Activated CD4-positive, alpha-beta memory T cell treated with anti-CD3 and anti-CD28 coated beads, Interleukin-2, amount 10 ng/mL, durations not matched to agents 7 days and 5 days (primary cell): ENCODE measurements at regions of chr6 and their contacts with region 1.

Region 1: DNA sequence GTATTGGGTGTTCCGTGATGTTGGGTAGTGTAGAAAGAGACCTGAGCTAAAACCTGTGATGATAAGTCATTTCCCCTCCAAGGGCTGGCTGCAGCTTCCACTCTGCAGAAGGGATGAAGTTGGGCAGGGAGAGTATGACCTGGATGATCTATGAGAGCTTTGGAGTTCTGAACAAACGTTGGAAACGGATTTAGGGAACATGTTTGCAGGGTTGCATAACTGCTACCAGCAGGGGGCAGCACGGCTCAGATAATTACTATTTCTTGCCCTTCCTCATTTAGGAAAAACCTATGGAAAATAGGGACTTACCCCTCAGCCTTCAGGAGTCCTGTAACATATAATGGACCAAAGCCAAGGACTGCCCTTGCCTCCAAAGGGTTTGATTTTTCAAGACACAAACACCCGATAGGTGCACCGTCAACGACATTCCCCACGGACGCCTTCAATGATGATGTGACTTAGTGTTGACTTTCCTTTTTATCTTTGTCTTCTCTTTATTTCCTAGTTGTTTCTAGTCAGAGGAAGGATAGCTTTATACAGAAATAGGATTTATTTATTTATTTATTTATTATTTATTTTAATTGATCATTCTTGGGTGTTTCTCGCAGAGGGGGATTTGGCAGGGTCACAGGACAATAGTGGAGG is 164.9 kb upstream of the SASH1 start:
- DNase-seq: peak; percentile 21
- H3K4me3 Mint-ChIP-seq: no peak overlapping the region
- H3K27ac Mint-ChIP-seq: no peak overlapping the region
- H3K4me1 Mint-ChIP-seq: no peaks in the 10 kb centered on the region
- H3K27me3 Mint-ChIP-seq: peaks cover 12% of the 10 kb centered on the region

Region 2: GRCh38 chr6:148021699-148022098 is 156.0 kb before region 1 on chr6:
- CTCF ChIA-PET with region 1: no interaction called
- POLR2A ChIA-PET with region 1: no interaction called
- DNase-seq: no peak
- H3K4me3 Mint-ChIP-seq: no peak overlapping the region
- H3K27ac Mint-ChIP-seq: no peak overlapping the region
- H3K4me1 Mint-ChIP-seq: no peaks in the 10 kb centered on the region
- H3K27me3 Mint-ChIP-seq: no peaks in the 10 kb centered on the region

Region 3: DNA sequence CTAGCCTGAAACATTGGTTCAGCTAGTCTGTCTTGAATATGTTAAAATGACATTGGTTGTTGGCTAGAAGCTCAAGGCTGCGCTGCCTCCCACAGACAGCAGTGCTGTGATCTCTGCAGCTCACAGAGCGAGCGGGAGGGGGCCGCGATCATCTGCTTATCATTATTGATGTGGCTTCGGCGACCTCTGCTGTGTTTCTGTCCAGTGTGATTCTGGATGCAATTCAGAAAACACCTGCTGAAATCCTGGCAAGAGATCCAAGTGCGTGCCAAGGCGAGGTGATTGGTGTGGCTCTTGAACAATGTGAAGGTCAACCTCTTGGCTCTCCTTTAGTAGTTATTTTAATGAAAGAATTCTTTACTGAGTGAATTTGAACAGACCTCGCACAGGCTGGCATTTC is 22.6 kb after region 1 on chr6:
- CTCF ChIA-PET with region 1: interaction called, 10 read pairs
- POLR2A ChIA-PET with region 1: no interaction called
- DNase-seq: no peak
- H3K4me3 Mint-ChIP-seq: no peak overlapping the region
- H3K27ac Mint-ChIP-seq: no peak overlapping the region
- H3K4me1 Mint-ChIP-seq: peaks cover 13% of the 10 kb centered on the region
- H3K27me3 Mint-ChIP-seq: peaks cover 85% of the 10 kb centered on the region

Region 4: GRCh38 chr6:148464319-148465010 is 286.8 kb after region 1 on chr6:
- CTCF ChIA-PET with region 1: interaction called, 31 read pairs
- POLR2A ChIA-PET with region 1: no interaction called
- DNase-seq: peak; percentile 59
- H3K4me3 Mint-ChIP-seq: no peak overlapping the region
- H3K27ac Mint-ChIP-seq: no peak overlapping the region
- H3K4me1 Mint-ChIP-seq: peaks cover 4% of the 10 kb centered on the region
- H3K27me3 Mint-ChIP-seq: peaks cover 19% of the 10 kb centered on the region